ENCODE measurements at regions of chr10 and their contacts with region 1.

Region 1: GRCh38 chr10:113093188-113094113 is 143.4 kb downstream of the TCF7L2 start:
- DNase-seq: peak; percentile 58
- H3K4me3 ChIP-seq: no peak overlapping the region
- H3K27ac ChIP-seq: peak overlapping the region; percentile 76
- H3K4me1 ChIP-seq: peaks cover 17% of the 10 kb centered on the region
- H3K27me3 ChIP-seq: no peaks in the 10 kb centered on the region
- CTCF ChIP-seq: no peak

Region 2: GRCh38 chr10:112949875-112950507 is 143.5 kb before region 1 on chr10 and contains the start of gene TCF7L2:
- intact Hi-C with region 1: loop called (anchors 10 kb)
- DNase-seq: peak; percentile 97
- H3K4me3 ChIP-seq: peak within 1 kb of the TSS; percentile 59
- H3K27ac ChIP-seq: peak within 1 kb of the TSS; percentile 87
- H3K4me1 ChIP-seq: peaks cover 6% of the 10 kb centered on the region
- H3K27me3 ChIP-seq: no peaks in the 10 kb centered on the region
- CTCF ChIP-seq: no peak
- total RNA-seq, gene TCF7L2: 65.1 to 98.9 TPM

Measured in colonic mucosa (tissue), 4 donors.